Gastrocnemius medialis (tissue), 4 donors: ENCODE measurements at regions of chr19 and their contacts with region 1.

Region 1: GRCh38 chr19:40650749-40651305 is 39.6 kb downstream of the NUMBL start:
- DNase-seq: peak; percentile 41 to 64
- ATAC-seq: peak; percentile 53 to 54
- H3K4me3 ChIP-seq: no peak overlapping the region
- H3K27ac ChIP-seq: peak overlapping the region; percentile 19 to 63 (median 54)
- H3K4me1 ChIP-seq: peaks cover 18 to 20% of the 10 kb centered on the region in 2 donors
- H3K27me3 ChIP-seq: no peaks in the 10 kb centered on the region
- CTCF ChIP-seq: no peak
- POLR2A ChIP-seq: no peak

Region 2: DNA sequence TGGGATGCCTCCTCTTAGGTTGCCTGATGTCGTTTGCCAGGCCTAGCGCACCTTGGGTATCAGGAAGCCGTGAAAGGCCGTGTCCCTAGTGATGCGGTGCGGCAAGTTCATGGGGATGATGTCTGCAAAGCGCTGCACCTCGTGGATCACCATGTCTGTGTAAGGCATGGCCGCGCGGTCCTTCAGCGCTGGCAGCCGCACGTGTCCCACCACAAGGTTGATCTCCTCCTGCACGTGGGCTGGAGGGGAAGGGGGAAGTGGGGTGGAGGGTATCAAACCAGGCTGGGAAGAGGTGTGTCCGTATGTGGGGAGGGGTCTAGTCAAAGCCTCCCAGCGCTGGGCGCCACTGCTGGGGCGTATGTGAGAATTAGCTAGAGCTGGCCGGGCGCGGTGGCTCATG is 171.3 kb after region 1 on chr19:
- in situ Hi-C with region 1: loop called in 1 of 4 experiments (anchors 10 kb)
- intact Hi-C with region 1: no loop called
- DNase-seq: no peak
- ATAC-seq: no peak
- H3K4me3 ChIP-seq: no peak overlapping the region
- H3K27ac ChIP-seq: no peak overlapping the region
- H3K4me1 ChIP-seq: peaks cover 15 to 23% of the 10 kb centered on the region in 2 donors
- H3K27me3 ChIP-seq: no peaks in the 10 kb centered on the region
- CTCF ChIP-seq: no peak
- POLR2A ChIP-seq: no peak

Region 3: GRCh38 chr19:41133260-41133659 is 482.4 kb after region 1 on chr19:
- in situ Hi-C with region 1: loop called (anchors 10 to 25 kb)
- intact Hi-C with region 1: no loop called
- DNase-seq: no peak
- ATAC-seq: no peak
- H3K4me3 ChIP-seq: no peak overlapping the region
- H3K27ac ChIP-seq: no peak overlapping the region
- H3K4me1 ChIP-seq: no peaks in the 10 kb centered on the region
- H3K27me3 ChIP-seq: peaks cover 0 to 5% (median 3%) of the 10 kb centered on the region in 3 donors
- CTCF ChIP-seq: no peak
- POLR2A ChIP-seq: no peak